Left cardiac atrium (tissue), 4 donors: ENCODE measurements at regions of chr6 and their contacts with region 1.

Region 1: GRCh38 chr6:52598123-52598823 is 21.4 kb upstream of the TRAM2 start:
- DNase-seq: peak; percentile 69
- ATAC-seq: peak; percentile 55 to 86

Region 2: GRCh38 chr6:52410991-52411390 is 187.3 kb before region 1 on chr6:
- intact Hi-C with region 1: loop called (anchors 2 to 5 kb)
- DNase-seq: no peak
- ATAC-seq: no peak

Region 3: GRCh38 chr6:52647199-52647598 is 48.9 kb after region 1 on chr6:
- intact Hi-C with region 1: loop called in 1 of 2 experiments (anchors 5 kb)
- DNase-seq: no peak
- ATAC-seq: no peak